HCT116 (cell line): ENCODE measurements at regions of chr4 and their contacts with region 1.

Region 1: GRCh38 chr4:121656269-121656641 is 40.5 kb downstream of the ANXA5 start:
- DNase-seq: peak; percentile 65
- ATAC-seq: peak; percentile 81
- H3K4me3 ChIP-seq: no peak overlapping the region
- H3K27ac ChIP-seq: no peak overlapping the region
- H3K4me1 ChIP-seq: no peaks in the 10 kb centered on the region
- H3K27me3 ChIP-seq: no peaks in the 10 kb centered on the region
- CTCF ChIP-seq: peak; percentile 50 to 64 (median 51); a peak in 5 of 6 replicates
- POLR2A ChIP-seq: no peak
- RAD21 ChIP-seq: peak; percentile 77

Region 2: DNA sequence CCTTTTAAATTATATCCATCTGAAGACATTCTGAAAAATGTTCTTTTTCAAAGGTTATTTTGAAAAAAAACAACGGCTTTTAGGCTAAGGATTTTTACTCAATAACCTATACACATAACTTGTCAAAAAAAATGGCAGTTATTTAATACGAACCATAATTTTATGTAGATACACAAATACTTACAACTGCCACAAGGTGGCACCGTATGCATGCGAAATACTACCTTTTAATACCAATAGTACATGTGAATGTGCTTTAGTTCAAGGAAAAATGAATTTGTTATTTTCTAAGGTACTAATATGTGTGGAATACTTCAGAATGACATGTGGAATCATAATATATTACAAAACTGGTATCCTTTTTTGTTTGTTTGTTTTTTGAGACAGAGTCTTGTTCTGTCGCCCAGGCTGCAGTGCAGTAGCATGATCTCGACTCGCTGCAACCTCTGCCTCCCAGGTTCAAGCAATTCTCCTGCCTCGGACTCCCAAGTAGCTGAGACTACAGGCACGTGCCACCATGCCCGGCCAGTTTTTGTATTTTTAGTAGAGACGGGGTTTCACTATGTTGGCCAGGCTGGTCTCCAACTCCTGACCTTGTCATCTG is 1585.0 kb before region 1 on chr4:
- CTCF ChIA-PET with region 1: no interaction called
- POLR2A ChIA-PET with region 1: no interaction called
- RAD21 ChIA-PET with region 1: no interaction called
- intact Hi-C with region 1: loop called (anchors 2 kb)
- DNase-seq: peak; percentile 57
- ATAC-seq: no peak
- H3K4me3 ChIP-seq: no peak overlapping the region
- H3K27ac ChIP-seq: no peak overlapping the region
- H3K4me1 ChIP-seq: peaks cover 2 to 8% of the 10 kb centered on the region in 2 experiments; a peak in 2 of 4 replicates
- H3K27me3 ChIP-seq: no peaks in the 10 kb centered on the region
- CTCF ChIP-seq: peak; percentile 38 to 70 (median 48); a peak in 4 of 6 replicates
- POLR2A ChIP-seq: no peak
- RAD21 ChIP-seq: peak; percentile 79

Region 3: GRCh38 chr4:121192480-121192879 is 463.8 kb before region 1 on chr4:
- CTCF ChIA-PET with region 1: no interaction called
- POLR2A ChIA-PET with region 1: no interaction called
- RAD21 ChIA-PET with region 1: no interaction called
- intact Hi-C with region 1: loop called (anchors 1 kb)
- DNase-seq: peak; percentile 33
- ATAC-seq: peak; percentile 70
- H3K4me3 ChIP-seq: no peak overlapping the region
- H3K27ac ChIP-seq: no peak overlapping the region
- H3K4me1 ChIP-seq: peaks cover 0 to 3% of the 10 kb centered on the region in 2 experiments; a peak in 1 of 4 replicates
- H3K27me3 ChIP-seq: no peaks in the 10 kb centered on the region
- CTCF ChIP-seq: peak; percentile 66 to 78 (median 68)
- POLR2A ChIP-seq: no peak
- RAD21 ChIP-seq: peak; percentile 76

Region 4: DNA sequence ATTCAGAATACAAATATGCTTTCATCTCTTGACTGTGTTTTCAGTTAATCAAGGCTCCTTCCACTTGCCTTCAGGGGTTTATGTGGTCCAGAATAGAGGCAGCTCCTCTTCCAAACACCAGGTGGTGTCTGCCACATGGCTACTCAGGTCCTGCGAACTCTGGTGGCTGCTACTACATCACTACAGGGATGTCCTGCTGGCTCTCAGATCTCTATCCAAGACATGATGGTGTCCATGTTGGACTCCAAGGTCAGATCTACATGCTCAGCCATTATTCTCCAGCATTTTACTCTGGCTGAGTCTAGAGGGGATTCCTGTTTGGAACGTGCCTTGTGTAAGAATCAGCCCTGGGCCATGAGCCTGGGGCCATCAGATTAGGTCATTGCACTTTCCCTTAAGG is 378.6 kb before region 1 on chr4:
- CTCF ChIA-PET with region 1: no interaction called
- POLR2A ChIA-PET with region 1: no interaction called
- RAD21 ChIA-PET with region 1: interaction called in 1 of 2 experiments, 4 read pairs
- intact Hi-C with region 1: loop called (anchors 10 kb)
- DNase-seq: peak; percentile 42
- ATAC-seq: peak; percentile 98
- H3K4me3 ChIP-seq: no peak overlapping the region
- H3K27ac ChIP-seq: no peak overlapping the region
- H3K4me1 ChIP-seq: 0 out of 4 replicates have a peak, but pooled peaks cover 0 to 2% of the 10 kb centered on the region in 2 experiments
- H3K27me3 ChIP-seq: no peaks in the 10 kb centered on the region
- CTCF ChIP-seq: peak; percentile 69 to 96 (median 78)
- POLR2A ChIP-seq: no peak
- RAD21 ChIP-seq: peak; percentile 53

Region 5: DNA sequence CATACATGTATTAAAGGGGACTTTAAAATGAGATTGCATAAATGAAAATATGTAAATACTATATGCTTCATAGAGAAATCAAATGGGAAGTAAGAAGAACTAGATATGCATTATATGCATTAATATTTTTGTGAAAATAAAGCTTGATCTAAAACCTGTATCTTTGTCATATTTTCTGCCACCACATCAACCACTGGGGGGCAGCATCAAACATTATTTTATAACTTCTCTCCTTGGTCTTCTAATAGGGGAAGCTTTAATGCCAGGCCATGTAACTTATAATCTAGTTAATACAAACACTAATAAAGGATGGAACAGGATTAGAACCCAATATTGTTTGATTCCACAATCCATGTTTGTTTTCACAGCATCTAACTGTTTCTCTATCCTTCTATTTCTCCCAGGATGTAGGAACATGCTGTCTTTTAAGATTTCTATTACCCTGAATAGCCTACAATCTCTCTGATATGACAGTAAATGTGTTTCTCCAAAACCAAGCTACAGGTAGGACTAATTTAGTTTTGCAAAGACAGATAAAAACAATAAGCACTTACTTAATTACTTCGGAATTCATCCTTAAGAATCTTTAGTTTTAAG is 285.4 kb before region 1 on chr4:
- CTCF ChIA-PET with region 1: interaction called, 14 read pairs
- POLR2A ChIA-PET with region 1: no interaction called
- RAD21 ChIA-PET with region 1: interaction called in 1 of 2 experiments, 3 read pairs
- intact Hi-C with region 1: loop called (anchors 1 kb)
- DNase-seq: peak; percentile 40
- ATAC-seq: peak; percentile 74
- H3K4me3 ChIP-seq: no peak overlapping the region
- H3K27ac ChIP-seq: no peak overlapping the region
- H3K4me1 ChIP-seq: peaks cover under 1 to 10% of the 10 kb centered on the region in 2 experiments; a peak in 3 of 4 replicates
- H3K27me3 ChIP-seq: no peaks in the 10 kb centered on the region
- CTCF ChIP-seq: peak; percentile 55 to 82 (median 64); a peak in 5 of 6 replicates
- POLR2A ChIP-seq: no peak
- RAD21 ChIP-seq: peak; percentile 71

Region 6: GRCh38 chr4:121462660-121463261 is 193.5 kb before region 1 on chr4:
- CTCF ChIA-PET with region 1: interaction called, 8 read pairs
- POLR2A ChIA-PET with region 1: no interaction called
- RAD21 ChIA-PET with region 1: interaction called, 4 to 5 read pairs
- intact Hi-C with region 1: loop called (anchors 5 kb)
- DNase-seq: peak; percentile 69
- ATAC-seq: peak; percentile 92
- H3K4me3 ChIP-seq: no peak overlapping the region
- H3K27ac ChIP-seq: no peak overlapping the region
- H3K4me1 ChIP-seq: peaks cover 0 to 6% of the 10 kb centered on the region in 2 experiments; a peak in 1 of 4 replicates
- H3K27me3 ChIP-seq: no peaks in the 10 kb centered on the region
- CTCF ChIP-seq: peak; percentile 71 to 86 (median 84); a peak in 5 of 6 replicates
- POLR2A ChIP-seq: no peak
- RAD21 ChIP-seq: peak; percentile 66